Breast epithelium (tissue), 4 donors: ENCODE measurements at regions of chrX and their contacts with region 1.

Region 1: GRCh38 chrX:31847773-31848172 is 775.9 kb upstream of the FTHL17 start:
- DNase-seq: no peak
- H3K4me3 ChIP-seq: no peak overlapping the region
- H3K27ac ChIP-seq: no peak overlapping the region
- H3K4me1 ChIP-seq: no peaks in the 10 kb centered on the region
- H3K27me3 ChIP-seq: peaks cover 0 to 3% of the 10 kb centered on the region in 2 donors
- CTCF ChIP-seq: no peak
- POLR2A ChIP-seq: no peak

Region 2: DNA sequence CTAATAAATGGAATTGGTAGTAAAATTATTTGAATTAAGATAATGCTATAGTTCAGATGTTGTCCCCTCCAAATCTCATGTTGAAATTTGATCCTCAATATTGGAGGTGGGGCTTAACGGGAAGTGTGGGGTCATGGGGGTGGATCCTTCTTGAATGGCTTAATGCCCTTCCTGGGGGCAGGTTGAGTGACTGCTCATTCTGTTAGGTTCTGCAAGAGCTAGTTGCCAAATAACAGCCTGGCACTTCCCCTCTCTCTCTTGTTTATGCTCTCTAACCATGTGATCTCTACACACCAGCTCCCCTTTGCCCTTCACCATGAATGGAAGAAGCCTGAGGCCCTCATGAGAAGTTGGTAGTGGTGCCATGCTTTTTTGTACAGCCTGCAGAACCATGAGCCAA is 51.1 kb before region 1 on chrX:
- intact Hi-C with region 1: loop called (anchors 2 kb)
- DNase-seq: no peak
- H3K4me3 ChIP-seq: no peak overlapping the region
- H3K27ac ChIP-seq: no peak overlapping the region
- H3K4me1 ChIP-seq: no peaks in the 10 kb centered on the region
- H3K27me3 ChIP-seq: no peaks in the 10 kb centered on the region
- CTCF ChIP-seq: no peak
- POLR2A ChIP-seq: no peak

Region 3: GRCh38 chrX:31909850-31910547 is 62.2 kb after region 1 on chrX:
- intact Hi-C with region 1: no loop called
- DNase-seq: no peak
- H3K4me3 ChIP-seq: no peak overlapping the region
- H3K27ac ChIP-seq: no peak overlapping the region
- H3K4me1 ChIP-seq: no peaks in the 10 kb centered on the region
- H3K27me3 ChIP-seq: no peaks in the 10 kb centered on the region
- CTCF ChIP-seq: no peak
- POLR2A ChIP-seq: no peak